Tibial artery (tissue), 4 donors: ENCODE measurements at regions of chr15 and their contacts with region 1.

Region 1: GRCh38 chr15:78618490-78618934 is 2.3 kb downstream of the CHRNA3 start:
- DNase-seq: peak; percentile 88 to 90
- H3K4me3 ChIP-seq: no peak overlapping the region
- H3K27ac ChIP-seq: no peak overlapping the region
- H3K4me1 ChIP-seq: peaks cover 0 to 24% (median 18%) of the 10 kb centered on the region in 4 donors
- H3K27me3 ChIP-seq: peaks cover 0 to 50% of the 10 kb centered on the region in 2 donors
- CTCF ChIP-seq: peak; percentile 87 to 88

Region 2: GRCh38 chr15:78133801-78134200 is 484.7 kb before region 1 on chr15:
- intact Hi-C with region 1: no loop called
- DNase-seq: no peak
- H3K4me3 ChIP-seq: no peak overlapping the region
- H3K27ac ChIP-seq: no peak overlapping the region
- H3K4me1 ChIP-seq: peaks cover 0 to 19% (median 9%) of the 10 kb centered on the region in 4 donors
- H3K27me3 ChIP-seq: no peaks in the 10 kb centered on the region
- CTCF ChIP-seq: no peak

Region 3: GRCh38 chr15:78552597-78552996 is 65.9 kb before region 1 on chr15:
- intact Hi-C with region 1: no loop called
- DNase-seq: no peak
- H3K4me3 ChIP-seq: no peak overlapping the region
- H3K27ac ChIP-seq: no peak overlapping the region
- H3K4me1 ChIP-seq: no peaks in the 10 kb centered on the region
- H3K27me3 ChIP-seq: no peaks in the 10 kb centered on the region
- CTCF ChIP-seq: no peak

Region 4: DNA sequence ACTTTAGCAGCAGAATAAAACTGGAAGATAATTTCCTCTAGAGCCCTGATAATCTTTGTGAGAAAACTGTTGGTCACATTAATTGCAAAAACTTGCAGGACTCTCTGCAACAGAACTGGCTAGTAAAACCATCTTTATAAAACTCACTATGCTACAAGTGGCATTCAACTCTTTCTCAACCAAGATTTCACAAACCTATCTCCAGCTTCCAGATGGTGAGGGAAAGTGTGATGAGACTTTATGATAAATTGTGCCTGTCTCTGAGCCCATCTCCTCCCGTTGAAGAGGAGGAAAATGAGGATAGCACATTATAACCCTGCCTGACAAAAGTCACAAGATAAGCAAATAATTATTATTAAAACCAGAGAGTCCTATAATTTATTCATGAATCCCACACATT is 88.0 kb after region 1 on chr15:
- intact Hi-C with region 1: loop called (anchors 2 kb)
- DNase-seq: no peak
- H3K4me3 ChIP-seq: no peak overlapping the region
- H3K27ac ChIP-seq: no peak overlapping the region
- H3K4me1 ChIP-seq: peaks cover 0 to 9% (median 3%) of the 10 kb centered on the region in 4 donors
- H3K27me3 ChIP-seq: peaks cover 0 to 29% of the 10 kb centered on the region in 2 donors
- CTCF ChIP-seq: no peak

Region 5: GRCh38 chr15:78750566-78750965 is 132.1 kb after region 1 on chr15:
- intact Hi-C with region 1: loop called (anchors 5 kb)
- DNase-seq: peak in 1 of 2 donors; percentile 22
- H3K4me3 ChIP-seq: peak overlapping the region; percentile 31 to 38
- H3K27ac ChIP-seq: peak overlapping the region; percentile 24 to 57
- H3K4me1 ChIP-seq: peaks cover 0 to 16% (median 4%) of the 10 kb centered on the region in 4 donors
- H3K27me3 ChIP-seq: no peaks in the 10 kb centered on the region
- CTCF ChIP-seq: no peak